ENCODE measurements at regions of chr19 and their contacts with region 1.

Region 1: GRCh38 chr19:43446746-43447489 is 18.5 kb downstream of the LYPD3 start:
- DNase-seq: peak; percentile 90
- ATAC-seq: peak; percentile 75

Region 2: DNA sequence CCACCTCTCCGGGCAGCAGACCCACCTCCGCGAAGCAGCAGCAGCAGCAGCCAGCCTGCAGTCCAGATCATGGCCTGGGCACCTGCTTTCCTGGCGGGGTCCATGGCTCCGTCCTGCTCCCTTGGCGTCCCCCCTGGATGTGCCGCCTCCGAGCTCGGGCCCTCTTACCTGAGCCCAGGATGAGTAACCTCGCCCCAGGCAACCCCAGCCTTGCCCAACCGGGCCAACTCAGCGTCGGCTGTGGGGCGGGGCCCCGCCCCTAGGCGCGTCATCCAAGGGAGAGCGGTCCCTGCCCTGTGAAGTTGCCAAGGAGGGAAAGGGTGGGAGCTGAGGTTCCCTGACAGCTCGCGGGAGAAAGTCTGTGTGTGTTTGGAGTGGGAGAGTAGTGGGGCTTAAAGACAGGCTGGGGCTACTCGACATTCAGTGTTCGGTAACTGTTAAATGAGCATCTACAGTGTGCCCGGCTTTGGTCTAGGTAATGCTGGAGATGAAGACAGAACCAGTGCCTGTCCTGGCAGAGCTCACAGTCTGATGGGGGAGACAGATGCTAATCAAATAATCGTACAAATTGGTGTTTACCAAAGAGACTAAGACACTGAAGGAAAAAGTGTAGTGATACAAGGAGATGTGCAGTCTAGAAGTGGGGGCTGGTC is 18.7 kb after region 1 on chr19 and contains the start of gene LYPD3:
- intact Hi-C with region 1: no loop called
- DNase-seq: peak; percentile 53
- ATAC-seq: no peak
- total RNA-seq, gene LYPD3: 0.19 TPM

Region 3: DNA sequence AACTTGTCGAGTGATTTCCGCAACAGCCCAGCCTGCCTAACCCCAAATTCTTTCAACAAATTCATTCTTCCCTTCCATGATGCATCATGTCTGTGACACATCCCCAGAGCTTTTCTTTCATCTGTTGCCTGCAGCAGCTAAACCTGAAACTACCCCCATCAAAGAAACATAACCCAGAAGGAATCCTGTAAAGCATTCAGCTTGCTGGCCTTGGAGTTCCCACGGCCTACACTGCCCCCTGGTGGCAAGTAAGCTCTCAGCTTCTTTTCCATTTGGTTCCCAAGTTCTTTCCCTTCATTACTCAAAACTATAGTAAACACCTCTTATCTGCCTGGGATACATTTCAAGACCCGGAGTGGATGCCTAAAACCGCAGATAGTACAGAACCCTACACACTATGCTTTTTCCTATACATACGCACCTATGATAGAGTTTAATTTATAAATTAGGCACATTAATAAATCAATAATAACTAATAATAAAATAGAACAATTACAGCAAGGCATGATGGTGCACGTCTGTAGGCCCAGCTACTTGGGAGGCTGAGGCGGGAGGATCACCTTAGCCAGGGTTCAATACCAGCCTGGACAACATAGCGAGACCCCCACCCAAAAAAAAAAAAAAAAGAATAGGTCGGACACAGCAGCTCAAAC is 72.6 kb after region 1 on chr19:
- intact Hi-C with region 1: loop called (anchors 1 kb)
- DNase-seq: peak; percentile 73
- ATAC-seq: peak; percentile 71

Region 4: DNA sequence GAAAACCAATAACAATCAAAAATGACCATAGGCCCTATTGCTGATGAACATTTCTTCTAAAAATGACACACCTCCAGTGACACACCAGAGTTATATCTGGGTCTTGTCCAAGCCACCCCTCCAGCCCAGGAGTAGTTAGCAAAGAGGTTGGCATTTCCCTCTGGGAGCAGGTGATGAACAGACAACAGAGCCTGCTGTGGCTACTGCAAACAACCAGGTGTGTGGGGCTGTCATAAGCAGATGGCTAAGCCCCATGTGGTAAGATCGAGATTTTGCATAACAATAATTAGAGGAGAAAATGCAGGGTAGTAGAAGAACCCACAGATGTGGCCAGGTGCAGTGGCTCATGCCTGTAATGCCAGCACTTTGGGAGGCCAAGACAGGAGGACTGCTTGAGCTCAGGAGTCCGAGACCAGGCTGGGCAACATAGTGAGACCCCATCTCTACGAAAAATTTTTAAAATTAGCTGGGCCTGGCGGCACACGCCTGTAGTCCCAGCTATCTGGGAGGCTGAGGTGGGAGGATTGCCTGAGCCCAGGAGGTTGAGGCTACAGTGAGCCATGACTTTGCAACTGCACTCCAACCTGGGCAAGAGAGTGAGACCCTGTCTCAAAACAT is 123.4 kb after region 1 on chr19:
- intact Hi-C with region 1: no loop called
- DNase-seq: no peak
- ATAC-seq: no peak

Region 5: GRCh38 chr19:43784981-43785808 is 338.3 kb after region 1 on chr19:
- intact Hi-C with region 1: loop called (anchors 10 kb)
- DNase-seq: no peak
- ATAC-seq: peak; percentile 82

Measured in Right ventricle myocardium inferior (tissue), 1 donor.